Breast epithelium (tissue), 4 donors: ENCODE measurements at regions of chr3 and their contacts with region 1.

Region 1: DNA sequence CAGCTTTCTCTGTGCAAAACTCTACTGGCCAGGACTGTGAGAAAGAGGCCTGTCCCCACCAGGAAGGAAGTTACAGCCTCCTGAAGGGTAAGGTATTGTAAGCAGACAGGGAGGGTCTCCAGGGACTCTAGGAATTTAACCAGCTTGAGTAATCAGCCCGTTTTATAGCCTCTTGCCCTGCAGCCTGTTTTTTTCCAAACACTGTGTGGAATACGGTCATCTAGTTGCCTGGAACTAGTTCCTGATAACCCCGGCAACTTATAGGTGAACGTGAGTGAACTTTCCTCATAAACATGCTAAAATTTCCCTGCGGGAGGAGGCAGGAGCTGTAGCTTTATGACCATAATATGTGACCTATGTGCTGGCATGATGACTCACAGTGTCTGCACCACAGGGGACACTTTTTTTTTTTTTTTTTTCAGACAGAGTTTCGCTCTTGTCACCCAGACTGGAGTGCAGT is 60.1 kb upstream of the DAZL start:
- DNase-seq: no peak
- H3K4me3 ChIP-seq: no peak overlapping the region
- H3K27ac ChIP-seq: no peak overlapping the region
- H3K4me1 ChIP-seq: no peaks in the 10 kb centered on the region
- H3K27me3 ChIP-seq: peaks cover 0 to 4% of the 10 kb centered on the region in 2 donors
- CTCF ChIP-seq: no peak
- POLR2A ChIP-seq: no peak

Region 2: GRCh38 chr3:16033889-16034687 is 631.2 kb before region 1 on chr3:
- intact Hi-C with region 1: loop called (anchors 5 kb)
- DNase-seq: no peak
- H3K4me3 ChIP-seq: no peak overlapping the region
- H3K27ac ChIP-seq: no peak overlapping the region
- H3K4me1 ChIP-seq: no peaks in the 10 kb centered on the region
- H3K27me3 ChIP-seq: no peaks in the 10 kb centered on the region
- CTCF ChIP-seq: no peak
- POLR2A ChIP-seq: no peak

Region 3: DNA sequence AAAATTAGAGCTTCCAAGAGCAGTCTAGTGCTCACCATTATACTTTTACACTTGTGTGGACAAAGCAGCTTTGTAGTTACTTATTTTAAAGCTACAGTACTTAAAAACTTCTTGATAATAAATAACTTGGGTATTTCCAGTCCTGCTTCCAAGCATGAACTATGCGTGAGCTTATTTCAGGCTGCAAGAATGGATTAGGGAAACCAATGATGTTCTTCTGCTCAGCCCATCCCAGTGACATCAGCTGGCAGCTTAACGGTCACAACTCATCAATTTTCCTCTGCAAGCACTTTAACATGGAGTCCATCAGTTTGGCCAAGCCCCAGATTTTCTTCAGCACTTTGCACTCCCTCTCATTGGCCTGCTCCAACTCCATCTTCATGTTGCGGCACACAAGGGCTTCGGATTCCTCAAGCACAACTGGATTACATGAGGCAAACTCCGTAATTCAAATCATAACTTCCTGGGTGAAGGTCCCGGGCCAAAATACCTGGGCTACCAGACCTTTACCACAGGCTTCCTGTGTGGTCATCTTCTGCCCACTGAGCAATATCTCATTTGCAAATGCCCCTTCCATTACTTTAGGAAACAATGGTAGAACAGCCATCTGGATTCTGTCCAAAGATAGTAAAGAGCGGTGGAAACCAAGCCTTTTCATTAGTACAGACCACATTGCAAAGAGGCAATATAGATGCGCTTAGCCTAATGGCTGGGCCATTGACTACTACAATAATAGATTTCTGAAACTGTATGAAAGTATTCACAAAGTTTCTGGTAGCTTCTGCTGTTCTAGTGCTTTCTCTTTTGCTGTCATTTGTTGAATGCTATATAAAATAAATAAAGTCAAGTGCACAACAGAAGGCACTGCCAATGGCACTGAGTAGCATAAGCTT is 27.4 kb after region 1 on chr3:
- intact Hi-C with region 1: no loop called
- DNase-seq: no peak
- H3K4me3 ChIP-seq: no peak overlapping the region
- H3K27ac ChIP-seq: no peak overlapping the region
- H3K4me1 ChIP-seq: no peaks in the 10 kb centered on the region
- H3K27me3 ChIP-seq: no peaks in the 10 kb centered on the region
- CTCF ChIP-seq: no peak
- POLR2A ChIP-seq: no peak